ENCODE measurements at regions of chr2 and their contacts with region 1.

Region 1: DNA sequence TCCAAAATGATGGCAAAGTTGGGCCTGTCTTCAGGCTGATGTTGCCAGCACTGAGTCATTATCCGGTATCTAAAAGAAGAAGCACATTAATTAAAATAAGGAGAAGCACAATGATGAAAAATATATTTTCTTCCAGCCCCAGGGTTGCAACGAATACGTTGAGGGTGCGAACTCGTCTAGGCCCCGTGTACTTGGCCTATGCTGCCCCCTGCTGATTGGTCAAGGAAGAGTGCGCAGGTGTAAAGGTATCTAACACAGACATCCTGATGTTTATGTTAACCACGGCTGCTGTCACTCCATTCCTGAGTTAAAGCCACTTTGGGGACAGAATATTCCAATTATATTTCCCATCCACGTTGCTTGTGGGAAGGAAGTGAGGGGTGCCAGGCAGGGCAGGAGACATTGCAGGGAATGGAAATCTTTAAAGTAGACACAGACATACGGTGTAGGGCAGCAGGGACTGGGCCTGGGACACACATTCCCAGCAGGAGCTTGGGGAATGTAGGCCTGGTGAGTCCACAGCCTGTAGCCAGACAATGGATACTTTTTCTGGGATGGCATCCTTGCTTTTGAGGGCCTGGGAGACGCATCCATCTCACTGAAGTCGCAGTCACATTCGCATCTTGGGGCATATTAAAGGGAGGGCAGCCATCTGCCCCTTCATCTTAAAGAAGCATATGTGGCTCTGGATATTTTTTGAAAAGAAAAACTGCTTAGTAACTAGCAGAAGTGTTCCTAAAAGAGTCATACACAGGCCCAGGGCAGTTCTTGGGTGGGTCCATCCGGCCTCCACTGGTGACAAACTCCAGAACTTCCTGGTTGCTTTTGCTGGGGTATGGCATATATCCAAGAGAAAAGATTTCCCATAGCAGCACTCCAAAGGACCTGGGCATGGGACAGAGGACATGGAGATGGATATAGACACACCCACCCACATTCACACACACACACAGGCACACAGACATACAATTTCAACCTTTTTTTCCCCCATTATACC is 81.9 kb downstream of the CLIP4 start:
- DNase-seq: peak in 1 of 2 donors; percentile 71
- H3K4me3 ChIP-seq: no peak overlapping the region
- H3K27ac ChIP-seq: no peak overlapping the region
- H3K4me1 ChIP-seq: no peaks in the 10 kb centered on the region
- H3K27me3 ChIP-seq: no peaks in the 10 kb centered on the region
- CTCF ChIP-seq: peak; percentile 69 to 75 (median 72)

Region 2: DNA sequence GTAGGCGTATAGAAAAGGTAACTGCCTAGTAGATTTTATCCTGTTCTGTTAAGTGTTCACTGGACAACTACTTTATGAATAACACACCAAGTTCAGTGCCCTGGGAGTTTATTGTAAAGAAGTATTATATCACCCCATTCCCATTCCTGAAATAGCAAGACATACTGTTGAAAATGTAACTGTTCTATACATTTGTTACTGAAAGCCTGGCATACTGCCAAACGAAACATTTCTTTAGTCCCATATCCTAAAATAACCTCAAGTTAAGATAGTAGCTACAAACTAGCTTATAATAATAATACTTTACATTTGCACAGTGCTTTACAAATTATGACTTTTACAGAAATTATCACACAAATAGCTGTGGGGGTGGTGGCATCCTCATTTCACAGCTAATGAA is 361.3 kb before region 1 on chr2:
- intact Hi-C with region 1: loop called (anchors 10 kb)
- DNase-seq: no peak
- H3K4me3 ChIP-seq: no peak overlapping the region
- H3K27ac ChIP-seq: no peak overlapping the region
- H3K4me1 ChIP-seq: no peaks in the 10 kb centered on the region
- H3K27me3 ChIP-seq: no peaks in the 10 kb centered on the region
- CTCF ChIP-seq: no peak

Region 3: GRCh38 chr2:28958689-28959088 is 238.4 kb before region 1 on chr2:
- intact Hi-C with region 1: loop called (anchors 1 kb)
- DNase-seq: peak in 1 of 2 donors; percentile 71
- H3K4me3 ChIP-seq: no peak overlapping the region
- H3K27ac ChIP-seq: no peak overlapping the region
- H3K4me1 ChIP-seq: no peaks in the 10 kb centered on the region
- H3K27me3 ChIP-seq: no peaks in the 10 kb centered on the region
- CTCF ChIP-seq: peak; percentile 54 to 74 (median 71)

Region 4: GRCh38 chr2:29097569-29097968 is 99.5 kb before region 1 on chr2:
- intact Hi-C with region 1: no loop called
- DNase-seq: no peak
- H3K4me3 ChIP-seq: no peak overlapping the region
- H3K27ac ChIP-seq: no peak overlapping the region
- H3K4me1 ChIP-seq: no peaks in the 10 kb centered on the region
- H3K27me3 ChIP-seq: no peaks in the 10 kb centered on the region
- CTCF ChIP-seq: no peak

Region 5: DNA sequence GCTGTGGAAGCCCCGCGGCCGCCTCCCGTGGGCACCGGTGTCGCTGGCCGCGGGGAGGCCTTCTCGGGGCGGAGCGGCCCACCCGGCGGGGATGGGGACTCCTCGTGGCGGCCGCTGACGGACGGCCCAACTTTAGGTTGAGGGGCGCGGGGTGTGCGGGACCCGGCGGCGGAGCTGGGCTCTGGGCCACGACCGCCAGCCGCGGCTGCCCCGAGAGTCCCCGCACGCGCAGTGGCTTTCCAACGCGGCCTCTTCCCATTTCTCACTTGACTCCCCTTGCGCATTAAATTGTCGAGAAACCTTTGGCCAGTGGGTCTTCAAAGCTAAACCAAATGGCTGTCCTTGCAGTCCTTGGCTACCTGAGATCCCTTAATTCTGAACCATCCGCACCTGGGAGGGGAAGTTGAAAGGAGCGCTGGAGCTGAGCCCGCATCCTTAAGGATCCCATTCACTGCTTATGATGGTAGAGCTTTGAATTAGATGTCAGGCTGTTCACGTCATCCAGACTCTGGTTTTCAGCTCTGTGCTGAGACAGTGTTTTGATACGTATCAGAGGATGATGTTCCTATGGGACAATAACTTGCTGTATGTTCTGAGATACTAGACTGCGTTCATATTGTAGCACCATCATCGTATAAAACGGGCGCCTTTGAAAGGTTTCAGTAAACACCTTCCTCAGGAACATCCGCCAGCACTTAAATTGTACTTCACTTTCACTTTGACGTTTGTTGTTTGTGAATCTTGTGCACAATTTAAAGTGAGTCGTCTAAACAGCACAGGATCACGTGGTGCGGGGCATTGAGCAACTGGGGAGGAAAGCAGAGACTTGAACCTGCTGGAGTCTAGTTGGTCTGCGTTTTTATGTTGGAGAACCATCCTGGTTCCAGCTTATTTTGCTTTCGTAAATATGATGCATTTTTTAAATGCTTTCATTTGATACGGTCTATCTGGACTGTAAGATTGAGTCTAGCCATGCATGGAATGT is 81.0 kb before region 1 on chr2:
- intact Hi-C with region 1: loop called (anchors 5 kb)
- DNase-seq: peak; percentile 39 to 81
- H3K4me3 ChIP-seq: peak overlapping the region; percentile 74 to 86
- H3K27ac ChIP-seq: peak overlapping the region; percentile 57 to 73
- H3K4me1 ChIP-seq: peaks cover 0 to 14% of the 10 kb centered on the region in 2 donors
- H3K27me3 ChIP-seq: no peaks in the 10 kb centered on the region
- CTCF ChIP-seq: no peak

Region 6: GRCh38 chr2:29255004-29255403 is 57.9 kb after region 1 on chr2:
- intact Hi-C with region 1: no loop called
- DNase-seq: no peak
- H3K4me3 ChIP-seq: no peak overlapping the region
- H3K27ac ChIP-seq: no peak overlapping the region
- H3K4me1 ChIP-seq: no peaks in the 10 kb centered on the region
- H3K27me3 ChIP-seq: no peaks in the 10 kb centered on the region
- CTCF ChIP-seq: no peak